Breast epithelium (tissue), 4 donors: ENCODE measurements at regions of chr13 and their contacts with region 1.

Region 1: GRCh38 chr13:102651892-102652291 is 43.0 kb downstream of the METTL21C start:
- DNase-seq: no peak
- H3K4me3 ChIP-seq: no peak overlapping the region
- H3K27ac ChIP-seq: no peak overlapping the region
- H3K4me1 ChIP-seq: no peaks in the 10 kb centered on the region
- H3K27me3 ChIP-seq: no peaks in the 10 kb centered on the region
- CTCF ChIP-seq: no peak
- POLR2A ChIP-seq: no peak

Region 2: GRCh38 chr13:101811284-101811839 is 840.5 kb before region 1 on chr13:
- intact Hi-C with region 1: no loop called
- DNase-seq: no peak
- H3K4me3 ChIP-seq: no peak overlapping the region
- H3K27ac ChIP-seq: no peak overlapping the region
- H3K4me1 ChIP-seq: no peaks in the 10 kb centered on the region
- H3K27me3 ChIP-seq: no peaks in the 10 kb centered on the region
- CTCF ChIP-seq: no peak
- POLR2A ChIP-seq: no peak

Region 3: GRCh38 chr13:101880581-101880980 is 771.3 kb before region 1 on chr13:
- intact Hi-C with region 1: loop called (anchors 5 kb)
- DNase-seq: no peak
- H3K4me3 ChIP-seq: no peak overlapping the region
- H3K27ac ChIP-seq: no peak overlapping the region
- H3K4me1 ChIP-seq: no peaks in the 10 kb centered on the region
- H3K27me3 ChIP-seq: no peaks in the 10 kb centered on the region
- CTCF ChIP-seq: no peak
- POLR2A ChIP-seq: no peak

Region 4: DNA sequence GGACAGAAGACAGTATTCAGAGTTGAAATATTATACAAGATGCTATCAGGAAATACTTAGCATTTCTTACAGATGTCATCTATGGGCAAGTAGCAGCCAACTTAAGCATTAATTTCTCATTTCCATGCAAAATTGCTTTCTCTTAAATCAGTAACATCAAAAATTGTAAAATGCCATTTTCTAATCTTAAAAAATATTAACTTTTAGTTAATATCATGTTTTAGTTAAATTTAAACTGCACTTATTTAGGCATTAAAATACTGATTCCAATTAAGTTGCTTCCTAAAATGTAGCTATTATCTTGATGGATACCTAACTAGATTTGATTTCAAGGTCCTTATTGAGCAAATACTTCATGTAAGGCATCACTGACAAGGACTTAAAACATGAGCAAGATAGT is 15.1 kb after region 1 on chr13:
- intact Hi-C with region 1: no loop called
- DNase-seq: no peak
- H3K4me3 ChIP-seq: no peak overlapping the region
- H3K27ac ChIP-seq: no peak overlapping the region
- H3K4me1 ChIP-seq: no peaks in the 10 kb centered on the region
- H3K27me3 ChIP-seq: no peaks in the 10 kb centered on the region
- CTCF ChIP-seq: no peak
- POLR2A ChIP-seq: no peak

Region 5: DNA sequence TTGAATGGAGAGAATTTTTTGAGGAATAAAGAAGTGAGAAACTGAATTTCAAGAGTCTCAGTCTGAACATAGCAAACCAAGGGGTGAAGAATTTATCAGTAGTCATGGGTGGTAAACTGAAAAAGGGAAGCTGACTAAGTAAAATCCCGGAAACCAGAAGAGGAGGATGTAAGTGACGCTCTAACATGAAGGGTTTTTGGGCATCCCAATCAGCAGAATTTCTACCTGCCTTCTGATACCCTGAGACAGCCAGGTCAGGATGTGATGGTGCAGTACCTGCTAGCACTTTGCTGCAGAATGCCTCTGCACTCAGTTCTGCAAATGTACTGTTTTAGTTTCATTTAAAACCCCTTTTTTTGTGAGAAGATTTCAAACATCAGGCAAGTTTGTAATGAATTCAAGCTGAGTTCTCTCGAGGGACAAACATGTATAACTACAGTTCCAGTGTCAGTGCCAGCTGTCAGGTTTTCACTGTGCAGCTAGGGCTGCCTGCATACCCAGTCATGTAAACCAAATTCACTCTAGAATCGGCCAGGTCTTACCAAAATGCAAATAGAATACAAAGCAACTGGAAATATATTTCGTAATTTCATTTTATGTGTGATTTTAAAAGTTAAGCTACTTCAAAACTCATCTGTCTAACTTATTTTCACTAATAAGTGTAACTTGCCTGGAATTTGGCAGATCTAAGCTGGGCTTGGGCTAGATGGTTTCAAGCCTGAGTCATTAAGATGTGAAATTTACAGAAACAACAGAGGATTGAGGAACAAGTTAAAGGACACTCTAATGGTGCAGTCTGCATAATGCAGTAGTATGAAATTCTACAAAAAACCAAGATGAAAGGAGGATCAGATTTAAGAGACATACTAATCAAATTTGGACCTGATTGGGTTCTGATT is 29.2 kb after region 1 on chr13:
- intact Hi-C with region 1: no loop called
- DNase-seq: no peak
- H3K4me3 ChIP-seq: no peak overlapping the region
- H3K27ac ChIP-seq: no peak overlapping the region
- H3K4me1 ChIP-seq: no peaks in the 10 kb centered on the region
- H3K27me3 ChIP-seq: no peaks in the 10 kb centered on the region
- CTCF ChIP-seq: no peak
- POLR2A ChIP-seq: no peak

Region 6: GRCh38 chr13:104043184-104043583 is 1391.3 kb after region 1 on chr13:
- intact Hi-C with region 1: no loop called
- DNase-seq: no peak
- H3K4me3 ChIP-seq: no peak overlapping the region
- H3K27ac ChIP-seq: no peak overlapping the region
- H3K4me1 ChIP-seq: no peaks in the 10 kb centered on the region
- H3K27me3 ChIP-seq: no peaks in the 10 kb centered on the region
- CTCF ChIP-seq: no peak
- POLR2A ChIP-seq: no peak